Posterior vena cava (tissue), 2 donors: ENCODE measurements at regions of chr9 and their contacts with region 1.

Region 1: DNA sequence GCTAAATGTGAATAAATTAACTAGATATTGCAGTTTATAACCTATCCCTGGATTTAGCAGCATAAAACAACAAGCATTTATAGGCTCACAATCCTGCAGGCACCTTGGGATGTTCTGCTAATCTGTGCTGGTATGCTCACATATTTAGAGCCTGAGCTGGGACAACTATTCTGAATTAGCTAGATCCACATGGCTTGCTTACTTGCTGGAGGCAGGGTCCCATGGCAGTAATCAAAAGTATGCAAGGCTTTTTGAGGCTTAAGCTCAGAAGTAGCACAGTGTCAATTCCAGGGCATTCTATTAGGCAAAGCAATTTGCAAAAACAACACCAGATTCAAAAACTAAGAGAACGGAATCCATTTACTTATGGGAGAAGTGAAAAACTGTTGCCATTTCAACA is 745.0 kb upstream of the ACO1 start:
- DNase-seq: no peak

Region 2: DNA sequence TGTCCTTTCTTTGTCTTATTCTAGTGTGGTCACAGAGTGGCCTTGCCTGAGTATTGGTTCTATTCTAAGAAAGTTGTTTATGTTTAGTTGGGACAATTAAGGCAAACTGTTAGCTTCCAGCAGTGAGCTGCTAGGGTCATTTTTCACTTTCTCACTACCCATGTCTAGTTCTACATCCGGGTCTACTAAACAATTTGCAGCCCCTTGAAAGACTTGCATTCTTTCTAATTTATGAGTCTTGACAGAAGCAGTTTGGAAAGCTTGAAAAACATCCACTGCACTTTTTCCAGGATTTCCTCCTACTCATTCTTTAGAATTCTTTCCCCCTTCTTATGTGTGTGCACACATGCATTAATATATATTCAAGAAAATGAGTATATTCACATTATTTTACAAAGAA is 147.2 kb before region 1 on chr9:
- intact Hi-C with region 1: loop called in 1 of 2 experiments (anchors 10 kb)
- DNase-seq: no peak